IMR-90 (cell line): ENCODE measurements at regions of chr7 and their contacts with region 1.

Region 1: GRCh38 chr7:5822742-5823503 is 41.5 kb upstream of the RNF216 start:
- DNase-seq: peak; percentile 85
- ATAC-seq: peak; percentile 100
- H3K4me3 ChIP-seq: peak overlapping the region; percentile 76
- H3K27ac ChIP-seq: peak overlapping the region; percentile 20; the same call in 1 of the 2 replicates
- H3K4me1 ChIP-seq: peaks cover 1% of the 10 kb centered on the region
- H3K27me3 ChIP-seq: no peaks in the 10 kb centered on the region
- CTCF ChIP-seq: no peak
- POLR2A ChIP-seq: no peak
- RAD21 ChIP-seq: no peak

Region 2: GRCh38 chr7:4641667-4642467 is 1181.1 kb before region 1 on chr7:
- CTCF ChIA-PET with region 1: no interaction called
- POLR2A ChIA-PET with region 1: no interaction called
- dilution Hi-C with region 1: no loop called
- in situ Hi-C with region 1: no loop called
- intact Hi-C with region 1: no loop called
- DNase-seq: peak; percentile 89
- ATAC-seq: peak; percentile 95
- H3K4me3 ChIP-seq: peak overlapping the region; percentile 74
- H3K27ac ChIP-seq: peak overlapping the region; percentile 97
- H3K4me1 ChIP-seq: 0 out of 2 replicates have a peak, but pooled peaks cover 2% of the 10 kb centered on the region
- H3K27me3 ChIP-seq: no peaks in the 10 kb centered on the region
- CTCF ChIP-seq: peak; percentile 72
- POLR2A ChIP-seq: peak; percentile 72; the same call in 1 of the 2 replicates
- RAD21 ChIP-seq: peak; percentile 44

Region 3: DNA sequence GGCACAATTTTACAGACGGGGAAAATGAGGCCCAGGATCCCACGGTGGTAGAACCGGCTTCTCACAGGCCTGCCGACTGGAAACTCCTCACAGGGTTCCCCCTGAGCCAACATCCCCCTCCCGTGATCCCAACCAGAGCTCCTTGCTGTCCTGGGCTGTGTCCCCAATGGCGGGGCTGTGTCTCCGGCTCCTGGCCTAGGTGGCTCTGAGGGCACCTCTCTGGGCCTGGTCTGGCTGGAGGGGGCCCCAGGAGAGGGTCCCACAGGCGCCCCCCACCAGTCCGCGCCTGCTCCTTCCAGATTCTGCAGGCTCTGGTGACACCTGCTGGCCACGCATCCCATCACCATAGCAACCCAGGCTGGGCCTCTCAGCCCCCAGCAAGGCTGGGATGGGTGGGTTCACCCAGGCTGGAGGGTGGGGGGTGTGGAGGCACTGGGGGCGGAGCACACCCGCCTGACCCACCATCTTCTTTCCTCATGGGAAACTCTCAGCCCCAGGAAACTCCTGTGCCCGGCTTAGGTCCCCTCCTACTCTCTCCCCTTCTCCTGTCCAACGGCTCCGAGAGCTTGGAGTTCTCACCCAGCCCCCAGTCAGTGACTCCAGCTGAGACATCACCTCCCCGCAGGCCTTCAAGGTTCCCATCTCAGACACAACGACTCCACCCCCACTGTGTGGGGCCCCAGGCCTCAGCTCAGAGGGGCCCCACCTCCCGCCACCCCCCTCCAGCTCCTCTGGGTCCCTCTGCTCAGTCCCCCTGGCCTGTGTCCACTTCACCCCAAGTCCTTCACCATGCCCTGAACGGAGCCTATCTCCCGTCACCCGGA is 372.2 kb before region 1 on chr7:
- CTCF ChIA-PET with region 1: no interaction called
- POLR2A ChIA-PET with region 1: no interaction called
- dilution Hi-C with region 1: no loop called
- in situ Hi-C with region 1: no loop called
- intact Hi-C with region 1: no loop called
- DNase-seq: peak; percentile 34
- ATAC-seq: peak; percentile 53
- H3K4me3 ChIP-seq: no peak overlapping the region
- H3K27ac ChIP-seq: no peak overlapping the region
- H3K4me1 ChIP-seq: peaks cover 1% of the 10 kb centered on the region; the same call in 1 of the 2 replicates
- H3K27me3 ChIP-seq: no peaks in the 10 kb centered on the region
- CTCF ChIP-seq: peak; percentile 60
- POLR2A ChIP-seq: no peak; the same call in 1 of the 2 replicates
- RAD21 ChIP-seq: peak; percentile 70

Region 4: GRCh38 chr7:5776894-5777645 is 45.9 kb before region 1 on chr7:
- CTCF ChIA-PET with region 1: interaction called, 3 read pairs
- POLR2A ChIA-PET with region 1: interaction called, 14 read pairs
- dilution Hi-C with region 1: no loop called
- in situ Hi-C with region 1: no loop called
- intact Hi-C with region 1: no loop called
- DNase-seq: no peak
- ATAC-seq: no peak
- H3K4me3 ChIP-seq: no peak overlapping the region
- H3K27ac ChIP-seq: no peak overlapping the region
- H3K4me1 ChIP-seq: peaks cover 13% of the 10 kb centered on the region
- H3K27me3 ChIP-seq: no peaks in the 10 kb centered on the region
- CTCF ChIP-seq: no peak
- POLR2A ChIP-seq: no peak
- RAD21 ChIP-seq: no peak

Region 5: GRCh38 chr7:6210621-6211372 is 387.9 kb after region 1 on chr7:
- CTCF ChIA-PET with region 1: no interaction called
- POLR2A ChIA-PET with region 1: interaction called, 11 read pairs
- dilution Hi-C with region 1: no loop called
- in situ Hi-C with region 1: no loop called
- intact Hi-C with region 1: no loop called
- DNase-seq: no peak
- ATAC-seq: no peak
- H3K4me3 ChIP-seq: no peak overlapping the region
- H3K27ac ChIP-seq: no peak overlapping the region
- H3K4me1 ChIP-seq: peaks cover 6% of the 10 kb centered on the region
- H3K27me3 ChIP-seq: no peaks in the 10 kb centered on the region
- CTCF ChIP-seq: no peak
- POLR2A ChIP-seq: no peak
- RAD21 ChIP-seq: no peak